WTC11 (cell line): ENCODE measurements at regions of chr7 and their contacts with region 1.

Region 1: GRCh38 chr7:37916673-37917660 is at the start of gene SFRP4:
- DNase-seq: peak; percentile 64
- ATAC-seq: peak; percentile 42
- H3K4me3 Mint-ChIP-seq: peak within 1 kb of the TSS; percentile 78
- H3K27ac Mint-ChIP-seq: no peak within 1 kb of the TSS
- H3K4me1 Mint-ChIP-seq: peaks cover 16% of the 10 kb centered on the region
- H3K27me3 Mint-ChIP-seq: peaks cover 84% of the 10 kb centered on the region
- CTCF ChIP-seq: no peak
- total RNA-seq, gene SFRP4: 0.07 to 0.24 TPM (median 0.09 TPM) in 3 replicates

Region 2: GRCh38 chr7:37786741-37787569 is 130.0 kb before region 1 on chr7:
- CTCF ChIA-PET with region 1: no interaction called
- POLR2A ChIA-PET with region 1: no interaction called
- DNase-seq: no peak
- ATAC-seq: no peak
- H3K4me3 Mint-ChIP-seq: no peak overlapping the region
- H3K27ac Mint-ChIP-seq: no peak overlapping the region
- H3K4me1 Mint-ChIP-seq: peaks cover 10% of the 10 kb centered on the region; the same call in 1 of the 2 replicates
- H3K27me3 Mint-ChIP-seq: no peaks in the 10 kb centered on the region
- CTCF ChIP-seq: no peak

Region 3: GRCh38 chr7:37901236-37901827 is 15.6 kb before region 1 on chr7:
- CTCF ChIA-PET with region 1: interaction called, 32 read pairs
- POLR2A ChIA-PET with region 1: interaction called, 3 read pairs
- DNase-seq: no peak
- ATAC-seq: peak; percentile 82
- H3K4me3 Mint-ChIP-seq: no peak overlapping the region
- H3K27ac Mint-ChIP-seq: no peak overlapping the region
- H3K4me1 Mint-ChIP-seq: peaks cover 2% of the 10 kb centered on the region
- H3K27me3 Mint-ChIP-seq: no peaks in the 10 kb centered on the region
- CTCF ChIP-seq: no peak; the same call in 1 of the 2 replicates

Region 4: DNA sequence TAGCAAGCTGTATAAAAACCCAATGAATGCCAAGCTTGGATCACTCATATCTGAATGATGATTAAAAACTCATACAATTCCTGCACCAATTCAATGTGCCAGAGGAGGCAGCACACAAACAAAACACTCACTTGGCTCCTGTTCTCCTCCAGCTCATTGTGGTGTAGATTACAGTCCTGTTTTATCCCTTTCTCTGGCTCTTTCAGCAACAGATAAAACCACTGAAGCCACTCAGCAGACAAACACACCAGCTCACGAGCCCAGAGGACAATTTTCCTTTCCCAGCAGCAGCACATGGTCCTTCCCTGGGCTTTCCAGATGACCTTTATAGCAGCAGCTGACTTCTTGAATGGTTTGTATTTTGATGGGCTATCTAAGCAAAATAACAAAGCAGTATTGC is 153.8 kb after region 1 on chr7:
- CTCF ChIA-PET with region 1: interaction called, 21 read pairs
- POLR2A ChIA-PET with region 1: no interaction called
- DNase-seq: peak; percentile 25
- ATAC-seq: peak; percentile 99
- H3K4me3 Mint-ChIP-seq: no peak overlapping the region
- H3K27ac Mint-ChIP-seq: peak overlapping the region; percentile 71
- H3K4me1 Mint-ChIP-seq: peaks cover 34% of the 10 kb centered on the region
- H3K27me3 Mint-ChIP-seq: no peaks in the 10 kb centered on the region
- CTCF ChIP-seq: 0 out of 2 replicates have a peak, but pooled peaks have one; percentile 22

Region 5: GRCh38 chr7:38318803-38319416 is 401.9 kb after region 1 on chr7:
- CTCF ChIA-PET with region 1: interaction called, 13 read pairs
- POLR2A ChIA-PET with region 1: no interaction called
- DNase-seq: peak; percentile 49
- ATAC-seq: peak; percentile 97
- H3K4me3 Mint-ChIP-seq: no peak overlapping the region
- H3K27ac Mint-ChIP-seq: peak overlapping the region; percentile 48
- H3K4me1 Mint-ChIP-seq: peaks cover 26% of the 10 kb centered on the region
- H3K27me3 Mint-ChIP-seq: no peaks in the 10 kb centered on the region; the same call in 1 of the 2 replicates
- CTCF ChIP-seq: no peak